AG04450 (cell line): ENCODE measurements at regions of chr16 and their contacts with region 1.

Region 1: GRCh38 chr16:75234856-75235696 is 16.3 kb downstream of the CTRB1 start:
- DNase-seq: no peak
- H3K4me3 ChIP-seq: no peak overlapping the region
- H3K27ac ChIP-seq: peak overlapping the region; percentile 31
- H3K27me3 ChIP-seq: no peaks in the 10 kb centered on the region
- CTCF ChIP-seq: no peak

Region 2: GRCh38 chr16:75099756-75100602 is 135.1 kb before region 1 on chr16:
- CTCF ChIA-PET with region 1: no interaction called
- POLR2A ChIA-PET with region 1: no interaction called
- DNase-seq: no peak
- H3K4me3 ChIP-seq: no peak overlapping the region
- H3K27ac ChIP-seq: peak overlapping the region; percentile 1
- H3K27me3 ChIP-seq: no peaks in the 10 kb centered on the region
- CTCF ChIP-seq: no peak; the same call in 1 of the 2 replicates

Region 3: DNA sequence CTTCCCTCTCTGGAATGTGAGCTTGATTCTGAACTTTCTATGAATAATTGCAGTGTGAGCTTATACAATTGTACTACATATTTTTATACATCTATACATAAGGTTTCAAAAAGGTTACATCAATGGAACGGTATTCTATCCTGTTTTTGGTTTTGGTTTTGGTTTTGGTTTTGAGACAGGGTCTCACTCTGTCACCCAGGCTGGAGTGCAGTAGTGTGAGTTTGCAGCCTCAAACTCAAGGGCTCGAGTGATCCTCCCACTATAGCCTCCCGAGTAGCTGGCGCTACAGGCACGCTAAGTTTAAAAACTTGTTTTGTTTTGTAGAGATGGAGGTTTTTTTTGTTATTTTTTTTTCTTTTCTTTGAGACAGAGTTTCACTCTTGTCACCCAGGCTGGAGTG is 15.2 kb before region 1 on chr16:
- CTCF ChIA-PET with region 1: interaction called, 10 read pairs
- POLR2A ChIA-PET with region 1: no interaction called
- DNase-seq: no peak
- H3K4me3 ChIP-seq: no peak overlapping the region
- H3K27ac ChIP-seq: no peak overlapping the region
- H3K27me3 ChIP-seq: no peaks in the 10 kb centered on the region
- CTCF ChIP-seq: no peak

Region 4: GRCh38 chr16:75294773-75295459 is 59.8 kb after region 1 on chr16:
- CTCF ChIA-PET with region 1: interaction called, 10 read pairs
- POLR2A ChIA-PET with region 1: no interaction called
- DNase-seq: no peak
- H3K4me3 ChIP-seq: no peak overlapping the region
- H3K27ac ChIP-seq: no peak overlapping the region
- H3K27me3 ChIP-seq: no peaks in the 10 kb centered on the region
- CTCF ChIP-seq: no peak

Region 5: DNA sequence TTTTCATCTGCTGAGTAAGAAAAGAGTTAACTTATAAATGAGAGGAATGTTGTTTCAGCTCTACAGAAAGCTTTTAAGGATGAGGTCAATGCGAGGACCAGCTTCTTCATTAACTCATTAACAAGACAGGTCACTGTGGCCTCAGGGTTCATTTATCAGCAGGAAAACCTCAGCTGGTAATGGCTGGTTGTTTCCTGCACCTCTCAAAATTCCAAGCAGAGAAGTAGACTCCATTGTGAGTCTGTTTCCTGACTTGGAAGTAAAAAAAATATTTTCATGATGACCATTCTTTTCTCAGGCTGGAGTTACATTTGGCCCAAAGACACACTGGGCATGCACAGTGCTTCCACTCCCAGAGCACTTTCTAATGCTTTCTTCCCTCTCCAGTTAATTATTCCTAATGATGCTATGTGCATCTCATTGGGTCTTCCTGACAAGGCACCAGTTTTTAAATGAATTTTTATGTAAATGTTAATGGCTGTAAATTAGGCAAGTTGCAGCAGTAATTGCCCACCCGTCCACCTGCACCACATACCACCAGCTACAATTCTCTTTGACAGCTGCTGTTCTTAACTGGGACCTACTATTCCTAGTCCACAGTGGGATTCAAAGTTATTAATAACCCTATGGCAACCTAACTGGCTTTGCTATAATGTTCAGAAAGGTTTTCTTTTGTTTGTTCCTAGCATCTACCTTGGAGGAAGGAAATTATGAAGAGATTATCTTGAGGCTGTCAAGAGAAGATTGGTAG is 105.8 kb after region 1 on chr16:
- CTCF ChIA-PET with region 1: no interaction called
- POLR2A ChIA-PET with region 1: no interaction called
- DNase-seq: no peak
- H3K4me3 ChIP-seq: no peak overlapping the region
- H3K27ac ChIP-seq: no peak overlapping the region
- H3K27me3 ChIP-seq: no peaks in the 10 kb centered on the region
- CTCF ChIP-seq: no peak

Region 6: GRCh38 chr16:75385507-75386152 is 150.6 kb after region 1 on chr16:
- CTCF ChIA-PET with region 1: interaction called, 36 read pairs
- POLR2A ChIA-PET with region 1: interaction called, 3 read pairs
- DNase-seq: peak; percentile 79
- H3K4me3 ChIP-seq: no peak overlapping the region
- H3K27ac ChIP-seq: no peak overlapping the region
- H3K27me3 ChIP-seq: no peaks in the 10 kb centered on the region
- CTCF ChIP-seq: peak; percentile 57